Ovary (tissue), 10 donors: ENCODE measurements at regions of chr17 and their contacts with region 1.

Region 1: DNA sequence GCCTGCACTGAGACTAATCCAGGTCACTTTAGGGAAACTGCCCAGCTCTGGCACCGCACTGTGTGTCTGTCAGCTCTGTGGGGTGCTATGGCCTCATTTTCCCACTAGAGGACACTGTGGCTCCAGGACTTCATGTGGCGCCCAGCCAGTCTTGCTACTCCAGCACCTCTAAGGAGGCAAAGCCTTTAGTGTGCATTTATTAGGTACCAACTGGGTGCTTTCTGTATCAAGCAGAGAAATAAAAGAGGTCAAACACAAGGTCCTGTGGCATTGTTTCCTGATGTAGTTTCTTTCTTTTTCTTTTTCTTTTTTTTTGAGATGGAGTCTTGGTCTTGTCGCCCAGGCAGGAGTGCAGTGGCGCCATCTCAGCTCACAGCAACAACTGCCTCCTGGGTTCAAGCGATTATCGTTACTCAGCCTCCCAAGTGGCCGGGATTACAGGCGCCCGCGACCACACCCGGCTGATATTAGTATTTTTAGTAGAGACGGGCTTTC is 12.5 kb upstream of the RHBDL3 start:
- DNase-seq: peak; percentile 73 to 86 (median 83)
- H3K4me3 ChIP-seq: no peak overlapping the region
- H3K27ac ChIP-seq: no peak overlapping the region
- H3K4me1 ChIP-seq: peaks cover 13% of the 10 kb centered on the region
- H3K27me3 ChIP-seq: no peaks in the 10 kb centered on the region
- CTCF ChIP-seq: peak; percentile 86 to 89 (median 87)
- EP300 ChIP-seq: no peak
- POLR2A ChIP-seq: no peak

Region 2: GRCh38 chr17:32206861-32207260 is 46.3 kb before region 1 on chr17:
- intact Hi-C with region 1: no loop called
- DNase-seq: no peak
- H3K4me3 ChIP-seq: no peak overlapping the region
- H3K27ac ChIP-seq: no peak overlapping the region
- H3K4me1 ChIP-seq: no peaks in the 10 kb centered on the region
- H3K27me3 ChIP-seq: no peaks in the 10 kb centered on the region
- CTCF ChIP-seq: no peak
- EP300 ChIP-seq: no peak
- POLR2A ChIP-seq: no peak

Region 3: DNA sequence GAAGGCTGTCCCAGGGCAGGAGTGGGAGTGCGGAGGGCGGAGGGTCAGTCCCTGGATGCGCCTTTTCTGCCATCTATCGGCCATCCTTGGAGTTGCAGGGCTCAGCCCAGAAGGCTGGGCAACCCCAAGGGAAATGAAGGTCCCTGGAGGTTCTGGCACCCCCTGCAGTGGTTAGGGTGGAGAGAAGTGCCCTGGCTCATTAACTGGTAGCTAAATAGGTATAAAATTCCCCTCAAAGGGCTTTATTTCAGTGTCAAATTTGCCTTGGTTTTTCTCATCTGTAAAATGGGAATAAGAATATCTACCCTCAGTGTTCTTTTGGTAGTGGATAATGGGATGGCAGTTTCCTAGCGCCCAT is 66.4 kb after region 1 on chr17:
- intact Hi-C with region 1: loop called (anchors 2 to 10 kb)
- DNase-seq: peak; percentile 71 to 85 (median 81)
- H3K4me3 ChIP-seq: no peak overlapping the region
- H3K27ac ChIP-seq: no peak overlapping the region
- H3K4me1 ChIP-seq: no peaks in the 10 kb centered on the region
- H3K27me3 ChIP-seq: no peaks in the 10 kb centered on the region
- CTCF ChIP-seq: peak; percentile 77 to 85 (median 81)
- EP300 ChIP-seq: no peak
- POLR2A ChIP-seq: no peak